GM10248 (cell line): ENCODE measurements at regions of chr2 and their contacts with region 1.

Region 1: DNA sequence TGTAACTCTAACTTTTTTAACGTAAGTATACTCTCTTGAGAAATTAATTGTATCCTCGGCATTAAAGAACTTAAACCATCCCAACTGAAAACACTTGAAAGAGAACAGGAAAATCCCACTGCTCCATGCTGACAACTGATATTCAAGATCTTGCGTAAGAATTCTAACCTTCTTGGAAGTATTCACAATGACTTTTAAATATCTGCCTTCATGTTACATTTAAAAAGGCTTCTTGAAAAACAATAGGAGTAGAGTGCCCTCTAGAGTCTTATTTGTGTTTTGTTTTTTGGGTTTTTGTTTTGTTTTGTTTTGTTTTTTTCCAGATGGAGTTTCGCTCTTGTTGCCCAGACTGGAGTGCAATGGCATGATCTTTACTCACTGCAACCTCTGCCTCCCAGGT is 65.4 kb upstream of the DNAJC10 start:
- DNase-seq: no peak
- CTCF ChIP-seq: peak; percentile 31

Region 2: GRCh38 chr2:182186132-182186735 is 464.5 kb before region 1 on chr2:
- CTCF ChIA-PET with region 1: interaction called, 39 read pairs
- POLR2A ChIA-PET with region 1: no interaction called
- DNase-seq: peak; percentile 6
- CTCF ChIP-seq: peak; percentile 65

Region 3: DNA sequence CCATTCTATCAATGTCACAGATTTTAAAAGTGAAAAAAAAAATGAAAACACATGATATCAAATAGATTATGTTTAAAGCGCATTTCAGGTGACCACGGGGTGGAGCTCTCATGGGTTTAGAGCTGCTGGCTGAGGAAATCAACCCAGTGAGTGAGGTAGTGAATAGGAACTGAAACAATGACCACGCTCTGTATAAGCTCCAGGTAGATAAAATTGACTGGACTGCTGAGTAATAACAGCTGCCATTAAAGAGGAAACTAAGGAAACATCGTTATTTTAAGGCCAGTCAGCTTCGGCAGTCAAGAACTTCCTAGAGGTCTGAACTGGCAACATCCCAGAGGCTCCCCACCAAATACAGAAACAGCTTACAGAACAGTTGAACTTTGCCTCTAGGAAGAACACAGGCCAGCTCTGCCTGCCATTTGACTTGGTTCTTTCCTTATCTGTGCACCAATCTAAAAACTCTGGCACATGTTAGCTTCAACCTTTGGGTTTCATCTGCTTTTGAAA is 409.8 kb before region 1 on chr2:
- CTCF ChIA-PET with region 1: interaction called, 35 read pairs
- POLR2A ChIA-PET with region 1: no interaction called
- DNase-seq: peak; percentile 69
- CTCF ChIP-seq: peak; percentile 64

Region 4: GRCh38 chr2:182631299-182631698 is 19.4 kb before region 1 on chr2:
- CTCF ChIA-PET with region 1: no interaction called
- POLR2A ChIA-PET with region 1: no interaction called
- DNase-seq: no peak
- CTCF ChIP-seq: no peak